GM12878 (cell line): ENCODE measurements at regions of chrX and their contacts with region 1.

Region 1: GRCh38 chrX:114075073-114075673 is 508.7 kb upstream of the HTR2C start:
- DNase-seq: no peak
- ATAC-seq: no peak
- H3K4me3 ChIP-seq: no peak overlapping the region
- H3K27ac ChIP-seq: no peak overlapping the region
- H3K4me1 ChIP-seq: no peaks in the 10 kb centered on the region
- H3K27me3 ChIP-seq: no peaks in the 10 kb centered on the region
- CTCF ChIP-seq: peak in 2 of 3 experiments; percentile 12 to 28; a peak in 1 of 6 replicates
- EP300 ChIP-seq: no peak
- POLR2A ChIP-seq: no peak
- RAD21 ChIP-seq: no peak

Region 2: GRCh38 chrX:113929004-113929403 is 146.2 kb before region 1 on chrX:
- CTCF ChIA-PET with region 1: no interaction called
- POLR2A ChIA-PET with region 1: no interaction called
- RAD21 ChIA-PET with region 1: no interaction called
- SMC1A ChIA-PET with region 1: no interaction called
- in situ Hi-C with region 1: no loop called
- intact Hi-C with region 1: loop called (anchors 1 kb)
- DNase-seq: no peak
- ATAC-seq: peak; percentile 87
- H3K4me3 ChIP-seq: no peak overlapping the region
- H3K27ac ChIP-seq: no peak overlapping the region
- H3K4me1 ChIP-seq: no peaks in the 10 kb centered on the region
- H3K27me3 ChIP-seq: no peaks in the 10 kb centered on the region
- CTCF ChIP-seq: peak; percentile 43 to 64 (median 53); a peak in 5 of 6 replicates
- EP300 ChIP-seq: no peak
- POLR2A ChIP-seq: no peak
- RAD21 ChIP-seq: peak; percentile 62

Region 3: DNA sequence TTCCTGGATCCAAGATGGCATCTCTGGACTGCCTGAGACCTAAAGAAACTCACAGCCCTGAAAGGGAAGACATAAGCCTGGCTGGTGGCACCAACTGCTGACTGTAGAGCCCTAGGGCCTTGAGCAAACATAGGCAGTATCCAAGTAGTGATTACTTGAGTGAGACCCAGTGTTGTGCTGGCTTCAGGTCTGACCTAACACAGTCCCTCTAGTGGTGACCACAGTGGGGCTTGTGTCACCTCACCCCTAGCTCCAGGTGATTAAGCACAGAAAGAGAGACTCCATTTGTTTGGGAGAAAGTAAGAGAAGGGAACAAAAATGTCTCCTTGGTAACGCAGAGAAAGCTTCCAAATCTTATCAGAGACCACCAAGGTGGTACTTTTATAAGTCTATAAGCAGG is 12.4 kb after region 1 on chrX:
- CTCF ChIA-PET with region 1: no interaction called
- POLR2A ChIA-PET with region 1: no interaction called
- RAD21 ChIA-PET with region 1: no interaction called
- SMC1A ChIA-PET with region 1: no interaction called
- in situ Hi-C with region 1: no loop called
- intact Hi-C with region 1: no loop called
- DNase-seq: no peak
- ATAC-seq: no peak
- H3K4me3 ChIP-seq: no peak overlapping the region
- H3K27ac ChIP-seq: no peak overlapping the region
- H3K4me1 ChIP-seq: no peaks in the 10 kb centered on the region
- H3K27me3 ChIP-seq: no peaks in the 10 kb centered on the region
- CTCF ChIP-seq: no peak
- EP300 ChIP-seq: no peak
- POLR2A ChIP-seq: no peak
- RAD21 ChIP-seq: no peak

Region 4: DNA sequence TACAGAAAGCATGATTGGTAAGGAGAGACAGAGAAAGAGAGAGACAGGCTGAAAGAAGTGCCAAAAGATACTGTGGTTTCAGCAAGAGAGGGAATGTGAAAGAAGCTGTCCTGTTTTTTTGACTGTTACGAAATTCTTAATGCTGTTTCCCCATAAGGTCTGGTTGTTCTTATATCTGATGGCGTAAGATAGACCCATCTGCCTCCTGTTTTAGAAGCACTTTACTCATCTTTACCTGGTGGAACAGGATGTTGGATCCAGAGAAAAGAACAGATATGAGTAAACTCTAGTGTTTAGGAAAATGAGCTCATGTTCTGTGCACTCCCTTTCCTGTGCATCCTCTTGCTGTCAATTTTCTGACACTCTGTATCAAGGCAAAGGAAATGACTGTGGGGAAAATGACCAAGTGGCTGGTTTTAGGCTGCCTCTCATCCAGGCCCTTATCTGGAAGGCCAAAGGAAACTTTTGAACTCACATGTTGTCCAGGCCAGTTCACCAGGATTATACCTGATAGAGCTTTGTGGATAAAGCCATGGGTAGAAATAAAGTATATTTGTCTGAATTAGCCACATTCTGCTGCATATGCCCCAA is 197.0 kb after region 1 on chrX:
- CTCF ChIA-PET with region 1: no interaction called
- POLR2A ChIA-PET with region 1: no interaction called
- RAD21 ChIA-PET with region 1: no interaction called
- SMC1A ChIA-PET with region 1: no interaction called
- in situ Hi-C with region 1: no loop called
- intact Hi-C with region 1: no loop called
- DNase-seq: no peak
- ATAC-seq: no peak
- H3K4me3 ChIP-seq: no peak overlapping the region
- H3K27ac ChIP-seq: no peak overlapping the region
- H3K4me1 ChIP-seq: no peaks in the 10 kb centered on the region
- H3K27me3 ChIP-seq: no peaks in the 10 kb centered on the region
- CTCF ChIP-seq: no peak
- EP300 ChIP-seq: no peak
- POLR2A ChIP-seq: no peak
- RAD21 ChIP-seq: no peak

Region 5: DNA sequence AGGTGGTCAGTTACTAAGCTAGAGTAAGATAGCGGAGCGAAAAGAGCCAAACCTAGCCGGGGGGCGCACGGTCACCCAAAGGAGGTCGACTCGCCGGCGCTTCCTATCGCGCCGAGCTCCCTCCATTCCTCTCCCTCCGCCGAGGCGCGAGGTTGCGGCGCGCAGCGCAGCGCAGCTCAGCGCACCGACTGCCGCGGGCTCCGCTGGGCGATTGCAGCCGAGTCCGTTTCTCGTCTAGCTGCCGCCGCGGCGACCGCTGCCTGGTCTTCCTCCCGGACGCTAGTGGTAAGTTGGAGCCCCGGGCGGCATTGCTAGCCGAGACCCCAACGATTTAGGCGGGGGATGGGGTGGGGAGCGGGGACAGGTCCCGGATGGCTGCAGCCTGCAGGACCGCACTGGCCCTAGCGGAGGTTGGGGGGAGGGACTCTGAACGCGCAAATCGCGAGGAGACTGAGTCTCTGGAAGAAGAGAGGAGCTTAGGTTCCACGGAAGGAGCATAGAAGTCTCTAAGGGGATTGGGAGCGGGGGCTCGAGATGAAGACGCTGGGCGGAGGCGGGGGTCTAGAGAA is 509.3 kb after region 1 on chrX:
- CTCF ChIA-PET with region 1: no interaction called
- POLR2A ChIA-PET with region 1: no interaction called
- RAD21 ChIA-PET with region 1: no interaction called
- SMC1A ChIA-PET with region 1: no interaction called
- in situ Hi-C with region 1: no loop called
- intact Hi-C with region 1: no loop called
- DNase-seq: no peak
- ATAC-seq: no peak
- H3K4me3 ChIP-seq: no peak overlapping the region
- H3K27ac ChIP-seq: no peak overlapping the region
- H3K4me1 ChIP-seq: no peaks in the 10 kb centered on the region
- H3K27me3 ChIP-seq: peaks cover 0 to 2% of the 10 kb centered on the region in 2 experiments; a peak in 3 of 4 replicates
- CTCF ChIP-seq: no peak
- EP300 ChIP-seq: no peak
- POLR2A ChIP-seq: no peak
- RAD21 ChIP-seq: no peak